ENCODE measurements at regions of chr3 and their contacts with region 1.

Region 1: GRCh38 chr3:58332575-58333188 is at the start of gene PXK:
- DNase-seq: peak; percentile 86
- ATAC-seq: peak; percentile 96 to 97
- total RNA-seq, gene PXK: 13.3 to 15.1 TPM

Region 2: DNA sequence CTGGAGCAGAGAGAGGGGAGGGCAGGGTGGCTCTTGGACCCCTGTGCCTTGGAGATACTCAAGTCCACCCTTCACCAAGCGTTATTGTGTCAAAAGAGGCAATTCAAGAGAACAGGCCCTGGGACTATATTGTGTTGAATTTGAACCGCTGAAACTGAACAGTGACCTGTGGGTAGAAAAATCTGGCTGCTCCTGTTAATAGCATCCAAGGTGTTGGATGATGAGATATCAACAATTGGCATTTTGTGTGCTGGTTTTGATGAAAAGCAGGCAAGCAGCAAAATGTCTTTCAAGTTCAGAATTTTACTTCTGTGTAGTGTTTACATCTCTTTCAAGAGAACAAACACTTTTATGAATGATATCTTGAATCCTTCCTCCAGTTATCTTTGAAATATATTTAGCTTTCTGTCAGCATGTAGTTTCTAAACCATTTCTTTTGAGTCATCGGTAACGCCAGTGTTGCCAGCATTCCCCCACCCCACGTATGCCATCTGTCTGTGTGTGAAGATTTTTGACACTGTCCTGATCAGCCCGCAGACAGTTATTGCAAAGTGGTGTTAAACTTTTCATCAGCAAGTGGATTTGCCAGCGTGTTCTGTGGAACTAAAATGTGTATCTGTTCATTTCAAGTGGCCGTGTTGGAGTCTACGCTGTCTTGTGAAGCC is 66.1 kb after region 1 on chr3:
- intact Hi-C with region 1: loop called in 1 of 2 experiments (anchors 5 kb)
- DNase-seq: no peak
- ATAC-seq: peak; percentile 73 to 81

Region 3: DNA sequence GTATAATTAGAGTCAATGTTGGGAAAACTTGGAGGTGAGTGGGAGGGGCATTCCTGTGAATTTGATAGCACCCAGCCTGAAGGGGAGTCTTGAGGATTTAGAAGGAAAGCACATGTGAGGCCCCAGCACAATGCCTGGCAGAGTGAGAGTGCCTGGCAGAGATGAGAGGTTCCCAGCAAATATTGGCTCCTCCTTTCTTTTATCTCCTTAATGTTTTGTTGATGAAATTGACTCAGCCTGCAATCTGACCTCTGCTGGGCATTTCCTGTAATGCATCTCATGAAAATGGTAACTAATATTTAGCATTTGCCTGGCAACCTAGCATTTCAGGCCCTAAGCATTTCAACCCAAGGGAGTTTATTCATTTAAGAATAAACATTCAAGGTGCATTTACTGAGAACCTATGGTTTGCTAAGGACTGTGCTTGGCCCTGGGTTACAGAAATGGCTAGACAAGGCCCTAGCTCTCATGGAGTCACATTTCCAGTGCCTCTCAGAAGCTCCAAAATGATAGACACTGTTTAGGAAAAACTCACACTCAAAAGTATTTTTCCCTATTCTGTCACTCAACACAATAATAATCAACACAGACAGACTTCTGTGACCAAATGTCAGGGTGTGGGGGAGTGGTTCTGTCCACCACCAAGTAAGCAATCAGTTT is 82.0 kb after region 1 on chr3:
- intact Hi-C with region 1: loop called (anchors 5 kb)
- DNase-seq: peak; percentile 66
- ATAC-seq: peak; percentile 73 to 82

Region 4: GRCh38 chr3:58471025-58471887 is 138.6 kb after region 1 on chr3:
- intact Hi-C with region 1: no loop called
- DNase-seq: peak; percentile 35
- ATAC-seq: peak; percentile 77 to 95

Region 5: GRCh38 chr3:58491506-58492402 is 159.1 kb after region 1 on chr3 and contains the start of gene KCTD6:
- intact Hi-C with region 1: loop called in 1 of 2 experiments (anchors 5 kb)
- DNase-seq: peak; percentile 95
- ATAC-seq: peak; percentile 96 to 97
- total RNA-seq, gene KCTD6: 5.3 to 7.1 TPM